Dorsolateral prefrontal cortex (tissue), 120 donors: ENCODE measurements at regions of chr1 and their contacts with region 1.

Region 1: DNA sequence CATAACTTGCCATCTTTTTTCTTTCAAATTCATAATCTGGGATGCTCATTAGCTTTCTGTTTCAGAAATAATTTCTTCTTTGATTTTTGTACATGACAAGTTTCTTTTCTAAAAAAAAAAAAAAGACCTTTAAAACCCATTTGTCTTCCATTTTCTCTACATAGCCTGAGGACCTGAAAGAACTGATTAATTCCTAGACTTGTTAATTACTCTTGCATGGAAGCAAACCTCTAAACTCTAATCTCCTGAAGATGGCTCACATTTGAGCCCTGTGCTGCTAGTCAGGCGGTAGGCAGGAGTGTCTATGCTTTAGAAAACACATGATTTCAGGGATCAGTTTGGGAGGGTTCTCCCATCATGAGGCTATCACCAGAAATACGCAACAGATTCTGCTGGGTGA is 152.0 kb downstream of the KAZN start:
- DNase-seq: no peak
- H3K4me3 ChIP-seq: no peak overlapping the region
- H3K27ac ChIP-seq: no peak overlapping the region
- H3K27me3 ChIP-seq: no peaks in the 10 kb centered on the region
- CTCF ChIP-seq: no peak

Region 2: DNA sequence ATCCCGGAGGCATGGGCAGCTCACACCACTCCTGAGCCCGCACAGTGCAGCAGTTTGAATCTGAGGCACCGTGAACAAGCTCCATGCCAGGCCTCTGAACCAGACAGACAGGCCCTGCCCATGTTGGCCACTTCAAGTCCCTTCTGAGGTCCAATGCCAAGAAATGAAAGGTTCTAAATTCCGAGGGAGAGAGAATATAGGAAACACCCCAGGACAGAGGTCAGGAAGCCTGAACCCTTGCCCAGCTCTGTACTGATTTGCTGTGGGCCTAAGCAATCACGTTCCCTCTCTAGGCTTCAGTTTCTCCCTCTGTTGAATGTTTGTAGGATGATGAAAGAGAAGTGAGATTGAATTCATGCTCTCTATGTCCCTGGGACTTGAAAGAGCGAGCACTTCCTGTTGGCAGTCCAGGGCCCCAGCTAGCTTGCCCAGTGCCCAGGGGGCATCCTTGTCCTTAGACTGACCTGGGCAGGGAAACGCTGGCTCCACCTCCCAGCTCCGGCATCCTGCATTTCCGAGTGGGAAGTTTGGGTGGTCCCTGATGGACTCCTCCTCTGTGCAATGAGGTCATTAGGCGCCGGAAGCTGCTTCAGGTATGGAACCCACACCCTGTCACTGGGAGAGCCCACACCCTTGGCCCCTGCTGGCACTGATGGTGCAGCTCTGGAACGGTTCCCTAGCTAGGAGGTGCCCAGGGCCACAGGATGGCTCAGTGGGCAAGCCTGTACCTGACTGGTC is 160.7 kb after region 1 on chr1:
- intact Hi-C with region 1: no loop called
- DNase-seq: no peak
- H3K4me3 ChIP-seq: no peak overlapping the region
- H3K27ac ChIP-seq: peak overlapping the region in 14 of 59 donors; percentile 1 to 60 (median 18)
- H3K27me3 ChIP-seq: no peaks in the 10 kb centered on the region
- CTCF ChIP-seq: no peak

Region 3: DNA sequence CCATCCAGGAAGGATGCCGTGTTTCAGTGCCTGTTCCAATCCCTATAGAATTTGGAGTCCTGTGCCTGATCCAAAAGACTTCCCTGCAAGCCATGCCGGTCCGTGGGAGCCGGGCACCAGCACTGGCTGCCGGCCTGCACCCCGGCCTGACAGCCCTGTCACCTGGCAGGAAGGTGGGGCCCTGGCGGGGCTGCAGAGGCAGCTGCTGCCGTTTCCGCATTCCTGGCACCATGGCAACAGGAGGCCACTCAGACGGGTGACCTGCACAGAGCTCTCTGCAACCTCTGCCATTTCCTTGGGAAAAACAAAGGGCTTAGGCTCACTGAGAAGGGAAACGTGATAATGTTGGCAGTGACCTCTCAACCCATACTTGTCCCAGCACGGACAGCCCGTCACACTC is 339.9 kb after region 1 on chr1:
- intact Hi-C with region 1: no loop called
- DNase-seq: peak in 1 of 10 donors; percentile 64
- H3K4me3 ChIP-seq: no peak overlapping the region
- H3K27ac ChIP-seq: peak overlapping the region in 1 of 59 donors; percentile 4
- H3K27me3 ChIP-seq: no peaks in the 10 kb centered on the region
- CTCF ChIP-seq: no peak

Region 4: DNA sequence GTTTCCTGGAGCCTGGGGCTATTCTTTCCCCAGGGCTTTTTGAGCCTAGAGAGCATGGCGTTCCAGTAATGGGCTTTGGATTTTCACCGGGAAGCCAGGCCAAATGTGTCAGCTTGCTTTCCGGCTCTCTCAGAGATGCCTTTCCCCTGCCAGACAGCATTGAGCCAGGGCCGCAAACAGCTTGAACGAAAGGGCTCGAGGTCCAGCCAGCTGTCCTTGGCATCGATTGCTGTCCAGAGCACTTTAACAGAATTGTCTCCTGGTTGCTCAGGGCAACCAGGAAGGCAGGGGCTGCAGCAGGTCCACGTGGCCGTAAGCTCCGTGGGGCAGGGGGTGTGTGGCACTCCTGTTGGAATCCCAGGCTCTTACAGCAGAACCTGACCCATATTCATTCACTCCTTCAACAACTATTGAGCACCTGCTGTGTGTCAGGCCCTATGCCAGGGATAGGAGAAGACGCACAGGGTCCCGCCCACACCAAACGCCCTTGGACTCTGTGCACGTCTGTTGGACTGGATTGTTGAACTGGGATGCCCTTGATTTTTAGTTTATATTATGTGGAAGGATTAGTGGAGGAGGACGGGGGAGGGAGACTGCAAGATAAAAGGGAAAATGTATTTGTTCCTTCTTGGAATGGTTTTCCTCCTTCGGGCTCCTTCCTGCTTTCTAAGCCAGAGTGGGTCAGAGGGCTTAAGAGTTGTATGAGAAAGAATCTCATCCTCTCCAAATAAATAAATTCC is 620.5 kb after region 1 on chr1:
- intact Hi-C with region 1: no loop called
- DNase-seq: peak in 6 of 10 donors; percentile 30 to 89 (median 48)
- H3K4me3 ChIP-seq: no peak overlapping the region
- H3K27ac ChIP-seq: peak overlapping the region in 12 of 59 donors; percentile 22 to 67 (median 41)
- H3K27me3 ChIP-seq: peaks cover 0 to 3% (median 0%) of the 10 kb centered on the region in 45 donors
- CTCF ChIP-seq: no peak

Region 5: GRCh38 chr1:15444468-15445389 is 694.2 kb after region 1 on chr1:
- intact Hi-C with region 1: loop called in 1 of 2 experiments (anchors 5 kb)
- DNase-seq: no peak
- H3K4me3 ChIP-seq: no peak overlapping the region
- H3K27ac ChIP-seq: no peak overlapping the region
- H3K27me3 ChIP-seq: no peaks in the 10 kb centered on the region
- CTCF ChIP-seq: no peak